ENCODE measurements at regions of chr19 and their contacts with region 1.

Region 1: DNA sequence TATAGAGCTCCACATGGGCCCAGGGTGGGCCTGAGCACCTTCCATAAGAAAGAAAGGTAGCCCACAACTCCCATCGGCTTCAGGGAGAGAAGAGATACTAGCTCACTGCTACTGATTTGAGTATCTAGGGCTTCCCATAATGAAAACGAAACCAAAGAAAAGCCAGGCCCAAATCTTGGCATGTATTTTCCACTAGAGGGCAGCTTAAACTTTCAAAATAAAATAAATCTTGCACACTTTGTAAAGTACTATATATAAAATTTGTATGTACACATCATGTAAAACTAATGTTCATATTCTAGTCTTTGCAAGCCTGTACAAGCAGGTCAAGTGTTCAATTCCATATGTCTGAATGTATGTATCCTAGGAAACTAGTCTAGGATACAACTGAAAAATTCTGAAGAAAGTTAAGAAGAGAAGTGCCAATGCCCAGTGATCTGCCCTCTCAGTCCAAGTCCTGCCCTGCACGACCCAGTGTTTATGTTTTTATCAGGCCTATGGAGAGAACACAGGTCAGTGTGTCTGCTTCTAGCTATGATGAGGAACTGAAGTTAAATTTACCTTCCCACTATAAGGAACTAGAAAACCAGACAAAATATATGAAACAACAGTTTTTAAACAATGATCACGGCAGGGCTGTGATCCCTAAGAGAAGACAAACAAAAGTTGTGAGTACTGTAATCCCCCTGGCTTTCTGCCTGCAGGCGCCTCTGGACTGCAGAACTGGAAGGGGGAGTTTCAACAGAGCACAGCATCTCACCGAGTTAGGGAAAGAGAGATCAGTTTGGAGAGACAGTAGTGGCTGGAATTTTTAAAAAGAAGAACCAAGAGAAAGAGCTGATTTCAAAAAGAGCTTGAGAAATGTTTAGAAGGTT is 475.7 kb downstream of the UQCRFS1 start:
- DNase-seq: peak; percentile 3
- H3K4me3 ChIP-seq: no peak overlapping the region
- CTCF ChIP-seq: peak; percentile 20

Region 2: DNA sequence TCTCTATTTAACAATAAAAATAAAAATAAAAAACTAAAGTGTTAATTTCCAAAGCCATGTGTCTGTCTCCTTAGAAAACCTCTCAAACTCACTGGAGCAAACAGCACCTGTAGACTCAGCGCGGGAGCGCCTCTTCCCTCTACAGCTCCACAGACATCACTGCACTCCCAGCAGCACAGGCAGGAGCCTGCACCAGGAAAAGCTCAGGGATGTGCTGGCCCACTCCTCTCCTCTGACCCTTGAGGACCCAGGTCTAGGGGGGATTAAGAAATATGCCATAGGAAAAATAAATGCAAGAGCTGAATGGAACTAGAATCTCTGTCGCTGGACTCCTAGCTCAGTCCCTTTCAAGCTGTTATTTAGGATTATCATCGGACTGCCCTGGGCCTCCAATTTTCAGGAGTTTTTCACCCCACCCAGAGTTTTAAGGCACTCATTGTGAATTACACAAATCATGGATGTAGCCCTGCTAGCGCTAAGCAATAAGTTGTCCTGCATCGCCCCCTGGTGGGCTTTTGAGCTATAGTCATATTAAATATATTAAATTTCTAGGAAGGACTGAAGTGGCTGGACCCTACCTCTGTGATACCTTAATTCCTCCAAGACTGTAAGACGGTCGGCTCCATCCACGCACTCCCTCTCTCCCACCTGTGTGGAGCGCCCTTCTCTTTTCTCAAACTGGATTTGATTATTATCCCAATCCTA is 141.8 kb after region 1 on chr19:
- CTCF ChIA-PET with region 1: interaction called, 140 read pairs
- POLR2A ChIA-PET with region 1: no interaction called
- DNase-seq: no peak
- H3K4me3 ChIP-seq: no peak overlapping the region
- CTCF ChIP-seq: peak; percentile 39

Region 3: GRCh38 chr19:28980236-28980868 is 243.1 kb after region 1 on chr19:
- CTCF ChIA-PET with region 1: interaction called, 12 read pairs
- POLR2A ChIA-PET with region 1: no interaction called
- DNase-seq: no peak
- H3K4me3 ChIP-seq: no peak overlapping the region
- CTCF ChIP-seq: peak; percentile 73

Region 4: GRCh38 chr19:29121684-29122083 is 384.4 kb after region 1 on chr19:
- CTCF ChIA-PET with region 1: interaction called, 25 read pairs
- POLR2A ChIA-PET with region 1: no interaction called
- DNase-seq: no peak
- H3K4me3 ChIP-seq: no peak overlapping the region
- CTCF ChIP-seq: peak; percentile 25

Region 5: DNA sequence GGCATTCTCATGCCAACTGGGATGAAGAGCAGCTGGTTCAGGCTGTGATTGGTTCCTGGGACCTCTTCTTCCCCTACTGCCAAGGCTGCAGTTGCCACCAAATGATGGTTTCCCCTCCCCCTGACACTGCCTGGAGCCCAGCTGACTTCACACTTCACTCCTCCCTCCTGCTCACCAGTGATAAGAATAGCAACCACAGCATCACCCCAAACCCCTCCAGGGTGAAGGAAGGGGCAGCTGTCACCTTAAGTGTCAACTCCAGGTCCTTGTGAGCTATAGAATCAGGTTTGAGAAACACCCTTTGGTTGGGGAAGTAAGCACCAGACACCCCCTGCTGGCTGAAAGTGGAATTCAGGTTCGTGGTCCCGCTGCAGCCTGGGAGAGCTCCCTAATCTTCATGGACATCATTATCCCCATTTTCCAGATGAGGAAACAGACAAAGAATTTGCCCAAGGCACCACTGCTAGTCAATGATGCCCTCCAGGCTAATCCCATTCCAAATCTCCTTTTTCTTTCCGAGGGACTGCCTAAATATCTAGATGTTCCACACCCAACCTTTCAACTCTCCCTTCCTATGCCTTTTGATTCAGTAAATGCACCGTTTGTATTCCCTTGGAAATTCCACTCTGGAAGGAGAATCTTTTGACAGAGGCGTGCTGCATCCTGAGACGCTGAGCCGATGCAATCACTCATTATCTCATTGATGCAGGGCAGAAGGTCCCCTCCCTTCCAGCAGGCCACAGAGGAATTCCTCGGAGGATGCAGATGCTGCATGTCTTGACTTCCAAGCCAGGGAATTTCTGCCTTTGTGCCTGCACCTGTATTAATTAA is 526.3 kb after region 1 on chr19:
- CTCF ChIA-PET with region 1: interaction called, 102 read pairs
- POLR2A ChIA-PET with region 1: no interaction called
- DNase-seq: no peak
- H3K4me3 ChIP-seq: no peak overlapping the region
- CTCF ChIP-seq: peak; percentile 71